ENCODE measurements at regions of chr21 and their contacts with region 1.

Region 1: DNA sequence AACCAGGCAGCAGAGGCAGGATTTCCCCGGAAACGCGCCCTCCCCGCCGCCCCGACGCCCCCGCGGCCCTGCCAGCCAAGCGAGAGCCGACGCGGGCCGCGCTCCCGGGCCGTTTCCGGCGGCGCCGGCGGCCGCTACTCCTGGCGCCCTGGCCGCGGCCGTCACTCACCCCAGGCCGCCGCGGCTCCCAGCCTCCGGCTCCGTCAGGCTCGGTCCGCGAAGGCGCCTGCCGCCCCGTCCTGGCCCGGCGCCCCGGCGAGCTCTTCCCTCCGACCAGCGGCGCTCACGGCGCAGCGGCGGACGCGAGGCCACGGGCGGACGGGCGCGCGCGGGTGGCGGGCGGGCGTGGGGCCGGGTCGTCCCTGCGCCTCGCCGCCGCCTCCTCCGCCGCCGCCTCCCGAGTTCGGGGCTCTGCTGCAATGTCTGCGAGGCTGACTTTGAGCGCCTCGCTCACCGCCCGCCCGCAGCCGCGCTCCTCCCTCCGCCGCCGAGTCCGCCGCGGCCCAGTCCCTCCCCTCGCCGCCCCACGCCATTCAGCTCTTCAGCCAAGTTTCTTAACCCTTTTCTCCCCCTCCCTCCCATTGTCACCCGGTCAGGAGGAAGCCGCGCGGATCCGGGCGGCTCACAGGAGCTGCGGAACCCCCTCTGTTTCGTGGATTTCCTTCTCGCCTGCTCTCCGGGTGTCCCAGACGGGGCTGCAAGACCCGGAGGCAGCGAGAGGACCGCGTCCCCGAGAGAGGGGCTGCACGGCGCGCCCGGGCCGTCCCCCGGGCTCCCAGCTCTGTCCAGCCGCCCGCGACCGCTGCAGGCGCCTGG is at the start of gene NRIP1:
- DNase-seq: peak; percentile 89
- ATAC-seq: peak; percentile 64
- H3K4me3 ChIP-seq: peak within 1 kb of the TSS; percentile 85
- H3K27ac ChIP-seq: peak within 1 kb of the TSS; percentile 72
- H3K4me1 ChIP-seq: peaks cover 27% of the 10 kb centered on the region
- H3K27me3 ChIP-seq: no peaks in the 10 kb centered on the region
- CTCF ChIP-seq: no peak
- total RNA-seq, gene NRIP1: 68.0 and 69.2 TPM in 2 replicates

Region 2: GRCh38 chr21:15121655-15122120 is 56.9 kb after region 1 on chr21:
- CTCF ChIA-PET with region 1: no interaction called
- POLR2A ChIA-PET with region 1: interaction called, 4 read pairs
- intact Hi-C with region 1: loop called (anchors 5 kb)
- DNase-seq: peak; percentile 62
- ATAC-seq: peak; percentile 95
- H3K4me3 ChIP-seq: peak overlapping the region; percentile 38
- H3K27ac ChIP-seq: peak overlapping the region; percentile 56
- H3K4me1 ChIP-seq: peaks cover 16% of the 10 kb centered on the region
- H3K27me3 ChIP-seq: no peaks in the 10 kb centered on the region
- CTCF ChIP-seq: no peak

Region 3: GRCh38 chr21:15250384-15250783 is 185.6 kb after region 1 on chr21:
- CTCF ChIA-PET with region 1: no interaction called
- POLR2A ChIA-PET with region 1: no interaction called
- intact Hi-C with region 1: loop called (anchors 1 kb)
- DNase-seq: peak; percentile 92
- ATAC-seq: peak; percentile 82
- H3K4me3 ChIP-seq: no peak overlapping the region
- H3K27ac ChIP-seq: peak overlapping the region; percentile 78
- H3K4me1 ChIP-seq: peaks cover 52% of the 10 kb centered on the region
- H3K27me3 ChIP-seq: no peaks in the 10 kb centered on the region
- CTCF ChIP-seq: no peak

Region 4: GRCh38 chr21:15293240-15293639 is 228.5 kb after region 1 on chr21:
- CTCF ChIA-PET with region 1: no interaction called
- POLR2A ChIA-PET with region 1: no interaction called
- intact Hi-C with region 1: loop called (anchors 10 kb)
- DNase-seq: peak; percentile 94
- ATAC-seq: peak; percentile 99
- H3K4me3 ChIP-seq: no peak overlapping the region
- H3K27ac ChIP-seq: peak overlapping the region; percentile 65
- H3K4me1 ChIP-seq: peaks cover 32% of the 10 kb centered on the region
- H3K27me3 ChIP-seq: no peaks in the 10 kb centered on the region
- CTCF ChIP-seq: no peak

Region 5: GRCh38 chr21:15552914-15553494 is 488.2 kb after region 1 on chr21:
- CTCF ChIA-PET with region 1: no interaction called
- POLR2A ChIA-PET with region 1: no interaction called
- intact Hi-C with region 1: loop called (anchors 1 kb)
- DNase-seq: peak; percentile 61
- ATAC-seq: peak; percentile 72
- H3K4me3 ChIP-seq: no peak overlapping the region
- H3K27ac ChIP-seq: no peak overlapping the region
- H3K4me1 ChIP-seq: no peaks in the 10 kb centered on the region
- H3K27me3 ChIP-seq: no peaks in the 10 kb centered on the region
- CTCF ChIP-seq: peak; percentile 91